ENCODE measurements at regions of chr11 and their contacts with region 1.

Region 1: GRCh38 chr11:126716456-126717083 is 284.0 kb downstream of the KIRREL3 start:
- DNase-seq: peak in 1 of 2 experiments; percentile 83
- H3K4me3 ChIP-seq: no peak overlapping the region
- H3K27ac ChIP-seq: no peak overlapping the region
- H3K4me1 ChIP-seq: peaks cover 0 to 7% (median 0%) of the 10 kb centered on the region in 4 experiments; a peak in 2 of 7 replicates
- H3K27me3 ChIP-seq: no peaks in the 10 kb centered on the region
- CTCF ChIP-seq: peak; percentile 60 to 85 (median 78)
- EP300 ChIP-seq: no peak
- POLR2A ChIP-seq: no peak
- RAD21 ChIP-seq: peak; percentile 84 to 87

Region 2: DNA sequence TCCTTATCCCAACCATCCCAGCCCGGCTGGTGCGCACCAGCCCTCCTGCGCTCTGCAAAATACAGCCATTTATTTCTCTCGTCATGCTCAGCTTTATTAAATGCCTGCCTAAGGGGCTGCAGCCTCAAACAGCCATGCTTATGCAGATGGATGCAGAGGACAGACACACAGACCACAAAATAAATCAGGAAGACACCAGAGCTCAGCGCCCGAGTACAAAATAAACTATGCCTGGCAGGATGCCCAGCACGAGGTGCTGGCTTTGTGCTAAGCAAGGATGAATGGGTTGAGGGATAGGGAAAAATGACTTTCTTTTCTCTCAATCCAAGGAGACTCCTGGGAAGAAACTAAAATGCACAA is 575.7 kb before region 1 on chr11:
- CTCF ChIA-PET with region 1: no interaction called
- POLR2A ChIA-PET with region 1: no interaction called
- DNase-seq: no peak
- H3K4me3 ChIP-seq: no peak overlapping the region
- H3K27ac ChIP-seq: no peak overlapping the region
- H3K4me1 ChIP-seq: peaks cover 7 to 16% (median 10%) of the 10 kb centered on the region in 4 experiments
- H3K27me3 ChIP-seq: no peaks in the 10 kb centered on the region
- CTCF ChIP-seq: no peak
- EP300 ChIP-seq: no peak
- POLR2A ChIP-seq: no peak
- RAD21 ChIP-seq: no peak

Region 3: GRCh38 chr11:126695293-126695692 is 21.3 kb before region 1 on chr11:
- CTCF ChIA-PET with region 1: interaction called, 76 read pairs
- POLR2A ChIA-PET with region 1: interaction called, 3 read pairs
- DNase-seq: no peak
- H3K4me3 ChIP-seq: no peak overlapping the region
- H3K27ac ChIP-seq: no peak overlapping the region
- H3K4me1 ChIP-seq: peaks cover 0 to 8% (median 0%) of the 10 kb centered on the region in 4 experiments; a peak in 1 of 7 replicates
- H3K27me3 ChIP-seq: no peaks in the 10 kb centered on the region; a peak in 1 of 7 replicates
- CTCF ChIP-seq: no peak
- EP300 ChIP-seq: no peak
- POLR2A ChIP-seq: no peak
- RAD21 ChIP-seq: no peak

Region 4: GRCh38 chr11:126732981-126733380 is 16.4 kb after region 1 on chr11:
- CTCF ChIA-PET with region 1: interaction called, 66 read pairs
- POLR2A ChIA-PET with region 1: no interaction called
- DNase-seq: no peak
- H3K4me3 ChIP-seq: no peak overlapping the region
- H3K27ac ChIP-seq: no peak overlapping the region
- H3K4me1 ChIP-seq: peaks cover 0 to 5% (median 0%) of the 10 kb centered on the region in 4 experiments; a peak in 4 of 7 replicates
- H3K27me3 ChIP-seq: 0 out of 7 replicates have a peak, but pooled peaks cover 0 to 2% (median 0%) of the 10 kb centered on the region in 4 experiments
- CTCF ChIP-seq: no peak
- EP300 ChIP-seq: no peak
- POLR2A ChIP-seq: no peak
- RAD21 ChIP-seq: no peak

Region 5: GRCh38 chr11:126790550-126791081 is 74.0 kb after region 1 on chr11:
- CTCF ChIA-PET with region 1: interaction called, 12 read pairs
- POLR2A ChIA-PET with region 1: no interaction called
- DNase-seq: peak in 1 of 2 experiments; percentile 44
- H3K4me3 ChIP-seq: no peak overlapping the region
- H3K27ac ChIP-seq: no peak overlapping the region
- H3K4me1 ChIP-seq: no peaks in the 10 kb centered on the region; a peak in 3 of 7 replicates
- H3K27me3 ChIP-seq: no peaks in the 10 kb centered on the region
- CTCF ChIP-seq: peak; percentile 17 to 47 (median 38); a peak in 3 of 4 replicates
- EP300 ChIP-seq: no peak
- POLR2A ChIP-seq: no peak
- RAD21 ChIP-seq: peak; percentile 48 to 53

Region 6: DNA sequence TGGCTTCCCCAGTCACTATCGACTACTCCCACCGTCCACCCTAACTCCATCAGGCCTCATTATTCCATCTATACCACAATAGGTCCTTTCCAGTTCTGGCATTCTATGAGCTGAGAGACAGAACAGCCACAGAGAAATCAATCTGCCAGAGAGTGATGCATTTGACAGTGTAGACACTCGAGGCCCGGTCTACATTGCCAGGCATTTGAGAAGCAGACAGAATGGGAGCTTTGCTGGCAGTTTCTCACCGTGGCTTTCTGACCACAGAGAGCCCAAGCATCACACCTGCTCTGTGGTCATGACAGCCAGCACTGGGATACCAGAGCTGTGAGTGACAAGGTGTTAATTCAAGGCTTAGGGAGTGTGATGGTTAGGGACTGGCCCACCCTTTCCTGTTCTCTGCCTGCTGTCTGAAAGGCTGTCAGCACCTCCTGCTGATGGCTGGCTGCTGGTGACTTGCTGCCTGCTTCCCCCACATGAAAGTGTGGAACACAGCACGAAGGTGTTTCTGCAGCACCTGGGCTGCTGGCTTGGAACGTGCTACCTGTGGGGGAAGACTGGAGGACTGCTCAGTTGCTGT is 146.2 kb after region 1 on chr11:
- CTCF ChIA-PET with region 1: interaction called, 35 read pairs
- POLR2A ChIA-PET with region 1: no interaction called
- DNase-seq: peak; percentile 19 to 49
- H3K4me3 ChIP-seq: no peak overlapping the region
- H3K27ac ChIP-seq: no peak overlapping the region
- H3K4me1 ChIP-seq: peaks cover 0 to 3% (median 0%) of the 10 kb centered on the region in 4 experiments; a peak in 1 of 7 replicates
- H3K27me3 ChIP-seq: no peaks in the 10 kb centered on the region; a peak in 1 of 7 replicates
- CTCF ChIP-seq: peak; percentile 67 to 87 (median 77)
- EP300 ChIP-seq: no peak
- POLR2A ChIP-seq: no peak
- RAD21 ChIP-seq: peak; percentile 86 to 89

Measured in H1 (cell line).